Activated CD4-positive, alpha-beta T cell treated with anti-CD3 and anti-CD28 coated beads for 36 hours (primary cell): ENCODE measurements at regions of chr1 and their contacts with region 1.

Region 1: GRCh38 chr1:225498549-225499136 is 70.8 kb upstream of the LBR start:
- DNase-seq: no peak
- ATAC-seq: no peak
- H3K4me3 Mint-ChIP-seq: no peak overlapping the region
- H3K27ac Mint-ChIP-seq: no peak overlapping the region
- H3K4me1 Mint-ChIP-seq: peaks cover 15% of the 10 kb centered on the region
- H3K27me3 Mint-ChIP-seq: peaks cover 9% of the 10 kb centered on the region

Region 2: DNA sequence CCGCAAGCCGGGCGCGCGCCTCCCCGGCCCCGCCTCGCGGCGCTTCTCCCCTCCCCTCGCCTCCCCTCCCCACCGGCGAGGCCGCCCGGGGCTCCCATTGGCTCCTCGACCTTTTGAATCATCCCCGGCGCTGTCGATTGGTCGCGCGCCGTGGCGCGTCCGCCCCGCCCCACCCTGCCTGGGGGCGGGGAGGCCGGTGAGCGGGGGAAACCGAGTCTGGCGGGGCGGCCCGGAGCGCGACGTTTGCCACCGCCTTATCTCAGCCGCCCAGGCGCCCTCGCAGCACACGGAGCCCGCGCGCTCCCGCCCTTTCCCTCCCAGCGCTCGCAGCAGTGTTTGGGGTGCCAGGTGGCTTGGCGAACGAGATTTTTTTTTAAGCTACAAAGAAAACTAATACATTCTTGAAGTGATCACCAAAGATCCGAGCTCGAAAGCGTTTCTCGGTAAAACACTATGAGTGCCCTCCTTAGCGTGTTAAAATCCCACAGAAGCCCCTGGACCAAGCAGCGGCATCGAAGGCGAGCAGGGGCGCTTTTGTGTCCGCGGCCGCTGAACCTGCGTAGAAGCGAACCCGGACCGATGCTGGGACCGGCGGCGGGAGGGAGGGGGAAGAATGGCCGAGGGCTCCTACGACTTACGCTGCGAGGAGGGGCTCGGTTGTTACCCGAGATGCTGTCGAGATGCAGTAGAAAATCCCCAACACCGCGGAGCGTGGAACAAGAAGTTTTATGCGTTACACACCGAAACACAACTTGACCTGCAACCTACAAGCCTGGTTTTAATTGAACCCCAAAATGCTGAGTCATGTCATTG is 70.4 kb before region 1 on chr1:
- CTCF ChIA-PET with region 1: no interaction called
- POLR2A ChIA-PET with region 1: no interaction called
- intact Hi-C with region 1: no loop called
- DNase-seq: peak; percentile 95
- ATAC-seq: peak; percentile 92
- H3K4me3 Mint-ChIP-seq: peak overlapping the region; percentile 86
- H3K27ac Mint-ChIP-seq: peak overlapping the region; percentile 96
- H3K4me1 Mint-ChIP-seq: peaks cover 45% of the 10 kb centered on the region
- H3K27me3 Mint-ChIP-seq: no peaks in the 10 kb centered on the region

Region 3: GRCh38 chr1:225480825-225481434 is 17.7 kb before region 1 on chr1:
- CTCF ChIA-PET with region 1: interaction called, 14 read pairs
- POLR2A ChIA-PET with region 1: no interaction called
- intact Hi-C with region 1: no loop called
- DNase-seq: peak; percentile 79
- ATAC-seq: peak; percentile 73
- H3K4me3 Mint-ChIP-seq: no peak overlapping the region
- H3K27ac Mint-ChIP-seq: no peak overlapping the region
- H3K4me1 Mint-ChIP-seq: peaks cover 24% of the 10 kb centered on the region
- H3K27me3 Mint-ChIP-seq: no peaks in the 10 kb centered on the region